Activated CD4-positive, alpha-beta T cell treated with anti-CD3 and anti-CD28 coated beads, Interleukin-2, amount 10 ng/mL, durations not matched to agents 24 days and 14 days (primary cell): ENCODE measurements at regions of chr10 and their contacts with region 1.

Region 1: DNA sequence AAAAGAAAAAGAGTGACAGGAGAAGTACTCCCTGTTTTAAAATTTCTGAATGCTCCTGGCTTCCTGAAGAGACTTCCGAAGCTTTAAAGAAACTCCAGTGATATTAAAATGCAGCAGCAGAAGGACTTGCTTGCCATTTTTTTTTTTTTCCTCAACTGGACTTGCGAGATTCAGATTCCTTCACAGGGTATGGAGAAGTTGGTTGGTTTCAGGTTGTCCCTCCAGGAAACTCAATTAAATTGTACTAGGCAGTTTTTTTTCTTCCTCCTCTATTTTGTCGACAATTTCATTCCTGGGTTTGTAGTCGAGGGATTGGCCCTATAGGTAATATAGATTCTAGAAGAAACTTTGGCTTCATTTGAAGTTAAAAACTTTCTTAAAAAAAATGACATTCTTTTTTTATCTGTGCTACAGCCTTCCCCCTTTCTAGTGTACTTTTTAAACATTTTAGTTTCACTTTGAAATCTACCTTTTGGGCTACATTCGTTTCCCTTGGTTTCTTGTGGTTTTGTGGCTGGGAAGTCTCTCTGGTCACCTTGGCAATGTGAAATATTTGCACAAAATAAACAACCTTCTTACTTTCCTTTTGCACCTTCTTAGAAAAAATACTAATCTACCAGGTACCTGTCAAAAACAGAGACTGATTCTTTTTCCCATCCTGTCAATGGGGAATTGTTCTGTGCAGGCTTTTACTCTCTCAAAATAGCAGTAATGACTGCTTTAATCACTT is 350.1 kb downstream of the GATA3 start:
- DNase-seq: peak; percentile 92
- H3K4me3 Mint-ChIP-seq: peak overlapping the region; percentile 82
- H3K27ac Mint-ChIP-seq: peak overlapping the region; percentile 87
- H3K4me1 Mint-ChIP-seq: peaks cover 71% of the 10 kb centered on the region
- H3K27me3 Mint-ChIP-seq: no peaks in the 10 kb centered on the region

Region 2: GRCh38 chr10:7445474-7446185 is 958.9 kb before region 1 on chr10:
- intact Hi-C with region 1: no loop called
- DNase-seq: no peak
- H3K4me3 Mint-ChIP-seq: no peak overlapping the region
- H3K27ac Mint-ChIP-seq: no peak overlapping the region
- H3K4me1 Mint-ChIP-seq: no peaks in the 10 kb centered on the region
- H3K27me3 Mint-ChIP-seq: peaks cover 9% of the 10 kb centered on the region

Region 3: DNA sequence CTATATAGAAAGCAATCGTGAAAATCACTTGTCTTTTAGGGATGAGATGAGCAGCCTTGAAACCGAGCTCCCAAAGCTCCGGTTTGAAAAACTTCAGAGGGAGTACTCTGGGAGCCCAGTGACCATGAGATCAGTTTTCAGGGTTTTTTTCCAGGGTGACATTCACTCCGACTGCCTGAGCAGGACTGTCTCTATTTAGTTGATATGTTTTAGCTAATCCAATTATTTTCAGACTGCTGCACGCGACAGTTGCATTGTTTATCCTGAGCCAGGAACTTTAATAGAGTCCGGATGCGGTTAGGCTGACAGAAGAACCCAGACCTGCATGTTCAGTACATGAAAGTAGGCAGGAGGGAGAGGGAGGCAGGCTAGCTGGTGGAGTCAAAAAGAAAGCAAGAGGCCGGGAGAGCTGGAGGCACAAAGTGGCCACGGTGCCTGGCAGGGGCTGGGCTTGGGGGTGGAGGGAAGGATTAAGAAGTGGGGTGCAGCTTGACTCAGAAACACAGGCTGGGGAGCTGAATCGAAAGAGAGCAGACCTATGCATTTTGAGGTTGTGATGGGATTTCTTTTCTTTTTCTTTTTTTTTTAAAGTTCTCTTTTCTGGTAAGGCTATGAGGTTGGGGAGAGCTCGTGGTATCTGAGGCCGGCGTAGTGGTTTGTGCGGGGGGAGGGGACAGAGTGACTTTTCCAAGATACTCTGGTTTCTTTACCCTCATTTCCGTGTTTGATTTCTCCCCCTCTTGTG is 344.4 kb before region 1 on chr10:
- intact Hi-C with region 1: loop called (anchors 1 kb)
- DNase-seq: peak; percentile 92
- H3K4me3 Mint-ChIP-seq: peak overlapping the region; percentile 90
- H3K27ac Mint-ChIP-seq: peak overlapping the region; percentile 93
- H3K4me1 Mint-ChIP-seq: peaks cover 70% of the 10 kb centered on the region
- H3K27me3 Mint-ChIP-seq: peaks cover 2% of the 10 kb centered on the region

Region 4: DNA sequence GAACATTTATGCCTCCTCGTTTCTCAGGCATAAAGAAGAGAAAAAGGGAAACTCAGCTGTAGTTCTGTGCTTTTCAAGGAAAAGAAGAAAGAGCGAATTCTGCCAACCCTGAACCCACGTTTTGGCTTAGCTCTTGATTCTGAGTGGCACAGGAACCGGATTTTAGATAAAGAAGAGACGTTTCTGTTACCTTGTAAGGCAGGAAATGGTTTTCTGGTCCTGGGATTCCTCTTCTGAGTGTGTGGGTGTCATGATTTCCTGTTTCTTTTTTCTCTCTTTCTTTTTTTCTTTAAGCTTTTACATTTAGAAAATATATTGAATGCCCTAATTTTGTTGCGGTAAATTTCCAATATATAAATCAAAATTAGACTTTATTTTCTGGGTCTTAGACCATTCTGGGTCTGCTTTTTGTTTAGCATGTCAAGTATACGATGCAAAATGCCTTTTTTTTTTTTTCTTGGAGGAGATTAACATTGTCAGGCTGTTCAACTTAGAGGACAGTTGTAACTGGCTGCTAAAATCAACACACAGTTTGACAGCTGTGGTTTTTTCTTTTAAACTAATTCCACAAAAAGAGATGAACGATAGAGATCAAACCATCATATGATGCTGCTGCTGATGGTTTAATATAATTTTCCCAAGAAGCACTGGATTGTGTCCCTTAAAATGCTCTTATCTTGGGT is 159.3 kb before region 1 on chr10:
- intact Hi-C with region 1: loop called (anchors 5 kb)
- DNase-seq: peak; percentile 77
- H3K4me3 Mint-ChIP-seq: peak overlapping the region; percentile 67
- H3K27ac Mint-ChIP-seq: peak overlapping the region; percentile 88
- H3K4me1 Mint-ChIP-seq: peaks cover 55% of the 10 kb centered on the region
- H3K27me3 Mint-ChIP-seq: no peaks in the 10 kb centered on the region

Region 5: DNA sequence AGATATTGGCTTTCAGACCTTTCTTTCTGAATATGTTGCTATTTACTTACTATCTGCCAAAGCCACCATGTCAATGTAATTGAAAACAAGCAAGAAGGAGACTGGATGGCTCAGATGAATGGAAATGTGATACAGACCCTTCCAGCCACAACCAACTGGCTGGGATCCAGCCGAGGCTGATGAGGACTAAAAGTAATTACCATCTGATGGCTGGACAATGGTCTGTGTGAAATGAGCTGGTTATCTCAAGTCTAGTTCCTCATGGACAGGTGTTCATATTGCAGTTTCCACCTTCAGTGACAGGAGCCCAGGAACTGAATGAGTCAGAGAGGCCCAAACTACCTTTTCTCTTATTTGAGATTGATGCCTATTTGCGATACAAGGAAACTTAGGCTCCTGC is 82.6 kb before region 1 on chr10:
- intact Hi-C with region 1: loop called (anchors 1 kb)
- DNase-seq: no peak
- H3K4me3 Mint-ChIP-seq: no peak overlapping the region
- H3K27ac Mint-ChIP-seq: no peak overlapping the region
- H3K4me1 Mint-ChIP-seq: peaks cover 30% of the 10 kb centered on the region
- H3K27me3 Mint-ChIP-seq: peaks cover 2% of the 10 kb centered on the region

Region 6: DNA sequence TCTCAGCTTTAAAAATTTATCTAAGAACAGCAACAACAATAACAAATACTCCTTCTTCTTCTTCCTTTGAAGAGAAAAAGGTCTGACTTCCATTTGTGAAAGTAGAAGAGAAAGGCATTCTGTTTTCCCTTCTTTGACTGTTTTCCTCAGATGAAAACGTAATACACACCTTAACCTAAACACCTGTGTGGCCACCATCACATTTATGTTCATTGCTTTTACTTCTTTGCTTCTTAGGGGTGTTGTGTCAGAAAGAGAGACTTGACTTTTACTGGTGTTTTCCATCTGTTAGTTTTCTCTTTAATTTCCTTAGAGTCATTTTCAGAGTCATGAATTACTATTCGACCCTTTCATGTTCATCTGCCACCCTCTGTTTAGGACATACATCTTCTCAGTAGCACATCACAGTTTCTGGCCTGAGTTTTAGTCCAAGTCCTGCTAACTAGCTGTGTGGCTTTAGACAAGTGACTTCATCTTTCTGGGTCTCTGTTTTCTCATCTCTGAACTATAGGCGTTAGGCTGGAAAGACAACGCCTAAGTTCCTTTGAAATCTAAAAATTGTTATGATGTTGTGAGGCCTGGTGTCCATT is 66.3 kb before region 1 on chr10:
- intact Hi-C with region 1: loop called (anchors 1 kb)
- DNase-seq: no peak
- H3K4me3 Mint-ChIP-seq: peak overlapping the region; percentile 39
- H3K27ac Mint-ChIP-seq: peak overlapping the region; percentile 91
- H3K4me1 Mint-ChIP-seq: peaks cover 15% of the 10 kb centered on the region
- H3K27me3 Mint-ChIP-seq: peaks cover 10% of the 10 kb centered on the region

Region 7: DNA sequence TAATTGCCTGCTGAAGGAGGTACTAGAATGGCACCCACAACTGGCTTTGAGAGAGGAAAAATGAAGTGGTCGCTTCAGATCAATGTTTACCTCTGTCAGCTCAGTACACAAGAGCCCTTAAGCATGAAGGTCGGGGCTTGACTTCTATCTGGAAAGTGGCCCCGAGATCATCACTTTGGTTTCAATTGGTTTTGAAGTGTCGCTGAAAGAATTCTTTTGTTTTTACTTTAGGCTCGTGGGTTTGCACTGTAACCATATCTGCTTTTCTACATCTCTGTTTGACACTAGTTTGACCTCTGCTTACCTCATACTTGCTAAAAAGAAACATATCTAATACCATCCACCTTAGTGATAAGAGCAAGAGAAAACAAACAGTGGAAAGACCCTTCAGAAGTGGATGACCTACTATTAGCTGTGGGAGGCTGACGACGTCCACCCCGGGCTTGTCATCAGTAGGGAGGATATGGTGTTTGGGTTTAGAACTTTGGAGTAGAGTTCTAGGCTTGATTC is 11.7 kb after region 1 on chr10:
- intact Hi-C with region 1: loop called (anchors 1 kb)
- DNase-seq: peak; percentile 83
- H3K4me3 Mint-ChIP-seq: peak overlapping the region; percentile 38
- H3K27ac Mint-ChIP-seq: peak overlapping the region; percentile 90
- H3K4me1 Mint-ChIP-seq: peaks cover 29% of the 10 kb centered on the region
- H3K27me3 Mint-ChIP-seq: peaks cover 10% of the 10 kb centered on the region